PC-9 (cell line): ENCODE measurements at regions of chr3 and their contacts with region 1.

Region 1: DNA sequence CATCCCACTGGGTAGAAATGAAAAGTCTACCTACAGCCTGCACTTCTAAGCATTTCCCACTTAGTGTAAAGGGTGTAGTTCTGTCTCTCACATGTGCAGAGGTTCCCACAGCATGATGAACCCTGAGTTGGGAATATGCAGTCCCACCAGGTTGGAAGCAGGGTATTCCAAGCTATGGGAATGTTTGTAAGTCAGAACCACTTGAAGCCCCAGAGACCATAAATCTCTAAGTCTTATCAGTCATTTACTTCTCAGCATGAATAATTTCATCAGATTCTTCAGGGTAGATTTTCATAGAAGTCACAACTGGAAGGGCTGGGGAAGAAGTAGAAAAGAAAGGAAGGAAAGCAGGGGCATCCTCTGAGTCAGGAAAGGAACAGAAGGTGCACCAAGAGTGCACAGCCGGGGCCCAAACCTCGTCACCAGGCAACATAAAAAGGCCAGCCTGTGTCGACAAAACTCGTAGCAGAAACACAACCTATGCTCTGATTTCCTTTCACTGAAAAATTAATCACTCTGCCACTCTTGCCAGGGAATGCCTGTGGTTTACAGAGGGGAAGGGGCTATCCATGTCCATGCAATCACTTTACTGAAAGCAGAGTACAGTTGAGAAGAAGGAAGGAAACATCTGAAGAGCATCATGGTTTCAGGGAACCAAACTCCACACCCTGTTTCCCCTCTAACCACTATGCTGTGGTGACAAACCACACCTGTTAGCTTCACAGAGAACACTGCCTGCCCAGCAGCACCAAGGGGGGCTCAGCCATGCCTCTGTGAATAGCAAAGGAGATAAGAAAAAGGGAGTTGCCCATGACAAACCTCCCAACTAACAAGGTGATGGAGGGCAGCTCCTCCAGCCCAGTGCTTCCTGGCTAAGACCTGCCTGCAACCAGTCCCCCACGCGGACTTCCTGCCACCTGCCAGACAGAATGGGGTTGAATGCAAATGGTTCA is 40.5 kb downstream of the SH3BP5 start:
- DNase-seq: peak in 1 of 2 experiments; percentile 30
- H3K4me3 ChIP-seq: no peak overlapping the region; the same call in 1 of the 2 replicates
- H3K27ac ChIP-seq: peak overlapping the region; percentile 71
- H3K4me1 ChIP-seq: peaks cover 28% of the 10 kb centered on the region
- H3K27me3 ChIP-seq: no peaks in the 10 kb centered on the region
- CTCF ChIP-seq: no peak

Region 2: GRCh38 chr3:15309662-15310335 is 17.9 kb after region 1 on chr3:
- CTCF ChIA-PET with region 1: no interaction called
- POLR2A ChIA-PET with region 1: no interaction called
- intact Hi-C with region 1: loop called (anchors 1 kb)
- DNase-seq: no peak
- H3K4me3 ChIP-seq: peak overlapping the region; percentile 3; the same call in 1 of the 2 replicates
- H3K27ac ChIP-seq: peak overlapping the region; percentile 82
- H3K4me1 ChIP-seq: peaks cover 37% of the 10 kb centered on the region
- H3K27me3 ChIP-seq: no peaks in the 10 kb centered on the region
- CTCF ChIP-seq: no peak